ENCODE measurements at regions of chr12 and their contacts with region 1.

Region 1: DNA sequence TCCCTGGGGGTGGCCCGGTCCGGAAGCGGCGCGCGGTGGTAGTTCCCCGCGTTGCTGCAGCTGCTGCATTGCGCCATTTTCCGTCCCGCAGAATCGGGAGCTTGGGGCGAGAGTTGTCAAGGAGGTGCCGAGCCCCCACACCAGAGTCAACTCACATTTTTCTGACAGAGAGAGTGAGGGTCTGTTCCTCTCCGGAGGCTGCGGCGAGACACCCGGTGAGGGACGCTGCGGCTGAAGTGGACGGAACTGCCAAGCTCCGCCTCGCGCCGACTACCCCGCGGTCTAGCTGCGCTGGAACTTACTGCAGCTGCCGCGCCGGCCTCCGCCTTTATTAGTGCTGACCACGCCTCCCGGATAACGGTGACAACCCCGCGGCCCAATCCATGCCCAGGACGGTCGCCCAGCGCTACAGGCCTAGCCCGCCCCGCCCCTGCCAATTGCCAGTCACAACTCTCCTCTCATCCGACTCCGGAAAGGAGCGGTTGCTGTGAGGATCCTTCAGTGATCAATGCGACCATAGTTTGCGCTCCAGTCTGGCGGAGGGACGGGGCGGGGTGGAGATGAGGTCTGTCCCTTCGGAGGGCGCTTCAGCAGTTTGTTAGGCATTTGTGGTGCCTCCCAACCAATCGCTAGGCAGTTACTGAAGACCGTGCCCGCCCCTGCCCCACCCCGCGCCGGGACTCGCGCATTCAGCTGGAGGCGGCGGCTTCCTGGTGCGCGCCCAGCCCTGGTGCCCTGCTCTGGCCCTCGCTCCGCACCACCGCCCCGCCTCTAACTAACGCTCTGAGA is at the start of gene VAMP1:
- DNase-seq: peak; percentile 96
- ATAC-seq: peak; percentile 93
- H3K4me3 Mint-ChIP-seq: peak within 1 kb of the TSS; percentile 92
- H3K27ac Mint-ChIP-seq: peak within 1 kb of the TSS; percentile 94
- H3K4me1 Mint-ChIP-seq: peaks cover 48% of the 10 kb centered on the region
- H3K27me3 Mint-ChIP-seq: no peaks in the 10 kb centered on the region
- CTCF ChIP-seq: no peak
- total RNA-seq, gene VAMP1: 32.9 and 34.5 TPM in 2 replicates

Region 2: DNA sequence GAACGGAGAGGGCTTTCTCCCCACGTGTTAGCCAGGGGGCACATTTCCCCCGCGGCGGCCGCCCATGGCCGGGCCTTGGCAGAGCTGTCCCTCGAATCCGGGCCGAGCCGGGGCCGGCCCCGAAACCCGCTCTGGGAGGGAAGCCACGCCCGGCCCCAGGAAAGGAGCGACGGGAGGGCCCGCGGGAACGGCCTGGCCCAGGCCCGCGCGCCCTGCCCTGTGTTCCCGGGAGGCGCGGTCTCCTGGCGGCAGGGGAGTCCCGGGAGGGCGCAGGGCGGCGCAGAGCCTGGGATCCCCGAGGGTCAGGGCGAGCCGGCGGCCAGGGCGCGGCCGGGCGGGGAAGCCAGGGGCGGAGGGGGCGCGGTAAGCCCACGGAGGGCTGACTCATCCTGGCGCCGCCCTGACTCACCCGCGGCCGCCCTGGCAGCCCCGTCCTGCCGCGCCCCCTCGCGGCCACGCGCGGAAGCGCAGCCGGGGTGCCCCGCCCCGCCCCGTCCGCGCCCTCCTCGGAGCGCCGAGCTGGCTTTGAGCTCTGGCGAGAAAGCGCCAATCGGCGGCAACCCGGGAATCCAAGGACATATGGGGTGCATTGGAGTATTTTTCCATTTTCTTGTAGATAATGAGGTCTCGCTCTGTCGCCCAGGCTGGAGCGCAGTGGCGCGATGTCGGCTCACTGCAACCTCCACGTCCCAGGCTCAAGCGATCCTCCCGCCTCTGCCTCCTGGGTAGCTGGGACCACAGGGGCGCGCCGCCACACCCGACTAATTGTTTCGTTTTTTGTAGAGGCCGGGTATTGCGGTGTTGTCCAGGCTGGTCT is 191.9 kb before region 1 on chr12:
- CTCF ChIA-PET with region 1: interaction called, 5 read pairs
- POLR2A ChIA-PET with region 1: no interaction called
- intact Hi-C with region 1: loop called (anchors 5 kb)
- DNase-seq: peak; percentile 95
- ATAC-seq: peak; percentile 98
- H3K4me3 Mint-ChIP-seq: peak overlapping the region; percentile 80
- H3K27ac Mint-ChIP-seq: no peak overlapping the region
- H3K4me1 Mint-ChIP-seq: peaks cover 6% of the 10 kb centered on the region
- H3K27me3 Mint-ChIP-seq: peaks cover 48% of the 10 kb centered on the region
- CTCF ChIP-seq: peak; percentile 71

Region 3: GRCh38 chr12:6423267-6424007 is 47.1 kb before region 1 on chr12:
- CTCF ChIA-PET with region 1: interaction called, 276 read pairs
- POLR2A ChIA-PET with region 1: interaction called, 200 read pairs
- intact Hi-C with region 1: loop called (anchors 1 kb)
- DNase-seq: no peak
- ATAC-seq: peak; percentile 32
- H3K4me3 Mint-ChIP-seq: peak overlapping the region; percentile 19
- H3K27ac Mint-ChIP-seq: peak overlapping the region; percentile 80
- H3K4me1 Mint-ChIP-seq: peaks cover 40% of the 10 kb centered on the region
- H3K27me3 Mint-ChIP-seq: peaks cover 2% of the 10 kb centered on the region
- CTCF ChIP-seq: no peak

Region 4: GRCh38 chr12:6443361-6443983 is 27.1 kb before region 1 on chr12:
- CTCF ChIA-PET with region 1: interaction called, 22 read pairs
- POLR2A ChIA-PET with region 1: interaction called, 63 read pairs
- intact Hi-C with region 1: no loop called
- DNase-seq: no peak
- ATAC-seq: peak; percentile 49
- H3K4me3 Mint-ChIP-seq: peak overlapping the region; percentile 84
- H3K27ac Mint-ChIP-seq: peak overlapping the region; percentile 92
- H3K4me1 Mint-ChIP-seq: peaks cover 69% of the 10 kb centered on the region
- H3K27me3 Mint-ChIP-seq: no peaks in the 10 kb centered on the region
- CTCF ChIP-seq: no peak

Region 5: GRCh38 chr12:6493497-6494257 is 23.1 kb after region 1 on chr12 and contains the start of gene NCAPD2:
- CTCF ChIA-PET with region 1: interaction called, 4 read pairs
- POLR2A ChIA-PET with region 1: interaction called, 89 read pairs
- intact Hi-C with region 1: loop called (anchors 1 kb)
- DNase-seq: peak; percentile 85
- ATAC-seq: peak; percentile 85
- H3K4me3 Mint-ChIP-seq: peak within 1 kb of the TSS; percentile 97
- H3K27ac Mint-ChIP-seq: peak within 1 kb of the TSS; percentile 96
- H3K4me1 Mint-ChIP-seq: peaks cover 28% of the 10 kb centered on the region
- H3K27me3 Mint-ChIP-seq: no peaks in the 10 kb centered on the region
- CTCF ChIP-seq: no peak
- total RNA-seq, gene NCAPD2: 38.4 and 40.9 TPM in 2 replicates

Region 6: DNA sequence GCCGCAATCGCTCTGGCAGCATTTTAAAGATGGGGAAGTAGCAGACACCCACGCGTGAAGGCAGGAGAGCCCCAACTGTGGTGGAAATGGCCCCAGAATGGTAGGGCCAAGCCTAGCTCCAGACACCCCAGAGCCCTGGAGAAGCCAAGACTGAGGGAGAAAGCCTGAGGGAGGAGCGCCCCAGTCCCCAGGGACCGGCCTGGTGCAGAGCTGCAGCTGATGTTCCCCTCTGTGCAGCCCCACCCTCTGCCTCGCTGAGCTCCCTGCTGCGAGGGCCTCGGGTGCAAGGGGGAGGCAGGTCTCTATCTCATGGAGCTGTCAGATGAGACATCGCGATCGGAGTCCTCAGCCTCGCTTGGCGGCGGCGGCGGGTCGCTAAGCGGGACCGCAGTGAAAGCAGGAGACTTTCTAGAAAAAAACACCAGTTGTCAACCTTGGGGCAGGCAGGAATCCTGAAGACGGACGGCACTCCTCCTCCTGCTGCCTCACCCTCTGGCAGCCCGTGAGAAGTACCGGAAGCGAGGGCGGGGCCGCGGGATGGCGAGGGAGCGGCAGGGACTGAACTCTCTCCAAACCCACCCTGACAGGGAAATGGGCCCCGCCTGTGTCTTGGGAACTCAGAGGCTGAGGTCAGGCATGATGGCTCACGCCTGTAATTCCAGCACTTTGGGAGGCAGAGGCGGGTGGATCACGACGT is 69.8 kb after region 1 on chr12:
- CTCF ChIA-PET with region 1: interaction called, 43 read pairs
- POLR2A ChIA-PET with region 1: interaction called, 46 read pairs
- intact Hi-C with region 1: loop called (anchors 1 kb)
- DNase-seq: no peak
- ATAC-seq: peak; percentile 45
- H3K4me3 Mint-ChIP-seq: peak overlapping the region; percentile 77
- H3K27ac Mint-ChIP-seq: peak overlapping the region; percentile 74
- H3K4me1 Mint-ChIP-seq: peaks cover 46% of the 10 kb centered on the region
- H3K27me3 Mint-ChIP-seq: no peaks in the 10 kb centered on the region
- CTCF ChIP-seq: no peak

Region 7: GRCh38 chr12:6662906-6663742 is 192.6 kb after region 1 on chr12 and contains the start of gene ING4:
- CTCF ChIA-PET with region 1: no interaction called
- POLR2A ChIA-PET with region 1: no interaction called
- intact Hi-C with region 1: no loop called
- DNase-seq: peak; percentile 80
- ATAC-seq: peak; percentile 97
- H3K4me3 Mint-ChIP-seq: peak within 1 kb of the TSS; percentile 97
- H3K27ac Mint-ChIP-seq: peak within 1 kb of the TSS; percentile 95
- H3K4me1 Mint-ChIP-seq: peaks cover 27% of the 10 kb centered on the region
- H3K27me3 Mint-ChIP-seq: no peaks in the 10 kb centered on the region
- CTCF ChIP-seq: no peak
- total RNA-seq, gene ING4: 31.6 and 39.2 TPM in 2 replicates

Region 8: DNA sequence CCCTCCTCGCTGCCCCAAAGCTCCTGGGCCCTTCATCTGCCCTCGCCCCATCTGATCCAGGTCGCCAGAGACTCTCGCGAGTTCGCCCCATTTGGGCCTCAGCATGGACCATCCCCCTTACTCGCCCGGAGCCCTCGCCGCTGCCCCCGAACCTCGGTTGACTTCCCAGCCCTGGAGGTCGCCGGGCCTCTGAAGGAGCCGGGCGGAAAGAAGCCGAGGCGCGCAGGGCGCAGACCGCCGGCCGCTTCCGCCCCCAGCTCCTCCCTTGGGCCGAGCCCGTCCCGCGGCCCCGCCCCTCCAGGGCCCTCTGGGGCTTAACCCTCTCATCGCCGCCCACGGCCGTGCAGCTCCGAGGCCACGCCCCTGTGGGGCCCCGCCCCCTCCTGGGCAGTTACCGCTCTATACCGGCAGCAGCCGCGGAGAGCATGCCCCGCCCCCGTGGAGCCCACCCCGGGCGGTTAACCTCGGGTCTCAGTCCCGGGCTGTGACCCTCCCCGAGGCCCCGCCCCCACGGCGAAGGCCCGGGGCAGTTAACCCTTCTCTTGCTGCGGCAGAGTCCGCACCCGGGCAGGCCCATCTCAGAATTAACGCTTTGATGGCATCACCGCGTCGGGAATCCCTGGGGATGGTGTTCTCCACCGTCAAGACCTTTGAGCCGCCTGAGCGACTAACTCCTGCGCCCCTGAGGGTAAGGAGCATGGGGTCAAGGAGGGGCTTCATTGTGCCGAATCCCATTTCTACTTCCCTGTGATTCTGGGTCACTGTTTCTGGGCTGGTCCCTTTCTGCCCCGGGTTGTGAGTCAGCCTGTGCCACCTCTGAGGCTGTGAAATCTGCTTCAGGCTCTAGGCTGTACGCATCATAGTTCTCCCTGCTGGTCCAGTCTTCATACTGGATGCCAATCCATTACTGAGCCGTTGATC is 402.8 kb after region 1 on chr12 and contains the start of gene SPSB2:
- CTCF ChIA-PET with region 1: no interaction called
- POLR2A ChIA-PET with region 1: no interaction called
- intact Hi-C with region 1: no loop called
- DNase-seq: peak; percentile 100
- ATAC-seq: peak; percentile 88
- H3K4me3 Mint-ChIP-seq: peak within 1 kb of the TSS; percentile 88
- H3K27ac Mint-ChIP-seq: peak within 1 kb of the TSS; percentile 85
- H3K4me1 Mint-ChIP-seq: peaks cover 37% of the 10 kb centered on the region
- H3K27me3 Mint-ChIP-seq: no peaks in the 10 kb centered on the region
- CTCF ChIP-seq: no peak
- total RNA-seq, gene SPSB2: 14.4 and 16.2 TPM in 2 replicates